Activated CD8-positive, alpha-beta T cell treated with anti-CD3 and anti-CD28 coated beads, Interleukin-2, amount 10 ng/mL, durations not matched to agents 7 days and 5 days (primary cell): ENCODE measurements at regions of chr11 and their contacts with region 1.

Region 1: GRCh38 chr11:14907411-14908213 is 15.6 kb upstream of the CYP2R1 start:
- DNase-seq: peak; percentile 89
- ATAC-seq: peak; percentile 68
- H3K4me3 Mint-ChIP-seq: no peak overlapping the region
- H3K27ac Mint-ChIP-seq: no peak overlapping the region
- H3K4me1 Mint-ChIP-seq: peaks cover 54% of the 10 kb centered on the region
- H3K27me3 Mint-ChIP-seq: no peaks in the 10 kb centered on the region

Region 2: DNA sequence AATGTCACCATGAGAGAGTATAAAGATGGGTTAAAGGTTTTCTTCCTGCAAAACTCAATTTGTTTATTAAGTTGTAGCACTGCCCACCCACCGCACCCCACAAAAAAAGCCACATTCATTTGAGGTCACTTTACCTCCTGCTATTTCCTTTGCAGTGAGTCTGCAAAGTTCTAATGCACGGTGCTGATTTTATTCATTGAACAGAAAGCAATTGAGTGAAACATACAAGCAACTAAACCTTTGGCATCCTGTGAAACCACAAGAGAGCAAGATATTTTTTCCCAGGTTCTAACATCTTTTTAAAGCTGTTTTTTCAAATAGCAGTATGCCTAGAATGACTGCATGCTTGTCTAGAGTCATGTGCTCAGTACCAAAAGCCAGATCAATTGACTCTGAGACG is 587.6 kb before region 1 on chr11:
- CTCF ChIA-PET with region 1: no interaction called
- POLR2A ChIA-PET with region 1: no interaction called
- DNase-seq: peak; percentile 88
- ATAC-seq: peak; percentile 93
- H3K4me3 Mint-ChIP-seq: peak overlapping the region; percentile 53
- H3K27ac Mint-ChIP-seq: peak overlapping the region; percentile 80
- H3K4me1 Mint-ChIP-seq: peaks cover 78% of the 10 kb centered on the region
- H3K27me3 Mint-ChIP-seq: no peaks in the 10 kb centered on the region

Region 3: GRCh38 chr11:14519917-14520746 is 387.5 kb before region 1 on chr11 and contains the start of gene PSMA1:
- CTCF ChIA-PET with region 1: interaction called, 26 read pairs
- POLR2A ChIA-PET with region 1: interaction called, 3 read pairs
- DNase-seq: peak; percentile 96
- ATAC-seq: peak; percentile 94
- H3K4me3 Mint-ChIP-seq: peak within 1 kb of the TSS; percentile 93
- H3K27ac Mint-ChIP-seq: peak within 1 kb of the TSS; percentile 94
- H3K4me1 Mint-ChIP-seq: peaks cover 29% of the 10 kb centered on the region
- H3K27me3 Mint-ChIP-seq: no peaks in the 10 kb centered on the region
- total RNA-seq, gene PSMA1: 211 to 215 TPM

Region 4: DNA sequence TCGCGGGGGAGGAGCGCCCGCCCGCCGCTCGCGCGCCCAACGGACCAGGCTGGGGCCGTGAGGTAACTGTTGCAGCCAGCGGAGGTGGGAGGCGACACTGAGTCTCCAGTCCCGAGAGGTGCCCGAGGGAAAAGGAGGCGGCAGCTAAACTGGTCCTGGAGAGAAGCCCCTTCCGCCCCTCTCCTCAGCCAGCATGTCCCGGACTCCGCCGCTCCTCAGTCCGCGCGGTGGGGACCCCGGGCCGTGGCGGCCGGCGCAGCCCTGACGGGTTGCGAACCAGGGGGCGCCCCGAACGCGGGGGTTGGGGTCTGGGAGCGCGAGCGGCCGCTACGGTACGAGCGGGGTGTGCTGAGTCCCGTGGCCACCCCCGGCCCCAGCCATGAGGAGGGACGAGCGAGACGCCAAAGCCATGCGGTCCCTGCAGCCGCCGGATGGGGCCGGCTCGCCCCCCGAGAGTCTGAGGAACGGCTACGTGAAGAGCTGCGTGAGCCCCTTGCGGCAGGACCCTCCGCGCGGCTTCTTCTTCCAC is 263.9 kb before region 1 on chr11 and contains the start of gene PDE3B:
- CTCF ChIA-PET with region 1: interaction called, 20 read pairs
- POLR2A ChIA-PET with region 1: interaction called, 8 read pairs
- DNase-seq: peak; percentile 89
- ATAC-seq: peak; percentile 77
- H3K4me3 Mint-ChIP-seq: peak within 1 kb of the TSS; percentile 81
- H3K27ac Mint-ChIP-seq: peak within 1 kb of the TSS; percentile 91
- H3K4me1 Mint-ChIP-seq: peaks cover 40% of the 10 kb centered on the region
- H3K27me3 Mint-ChIP-seq: no peaks in the 10 kb centered on the region
- total RNA-seq, gene PDE3B: 74.8 to 81.4 TPM

Region 5: DNA sequence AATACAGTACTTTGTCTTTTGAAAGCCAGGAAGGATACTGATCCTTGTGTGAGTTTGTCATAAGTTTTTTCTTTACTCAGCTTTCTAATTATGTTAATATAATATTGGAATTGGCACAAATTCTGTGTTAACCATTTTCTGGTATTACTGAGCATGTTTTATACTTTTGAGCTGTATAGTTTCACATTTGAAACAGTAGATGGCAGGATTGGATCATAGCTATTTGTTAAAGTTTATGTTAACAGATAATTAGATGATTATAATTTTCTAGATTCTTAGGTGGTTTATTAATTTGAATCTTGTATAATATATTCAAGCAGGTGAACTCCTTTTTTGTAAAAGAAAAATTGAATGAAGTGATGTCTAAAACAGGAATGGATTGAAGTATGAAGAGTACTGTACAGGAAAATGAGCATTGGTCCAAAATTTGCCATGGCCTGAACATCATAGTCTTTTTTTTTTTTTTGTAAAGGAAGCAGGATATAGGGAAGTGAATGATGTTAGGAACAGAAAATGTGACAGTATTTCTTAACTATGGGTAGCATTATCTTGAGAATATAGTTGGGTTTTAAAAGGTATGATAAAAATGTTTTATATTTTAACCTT is 117.6 kb before region 1 on chr11:
- CTCF ChIA-PET with region 1: interaction called, 125 read pairs
- POLR2A ChIA-PET with region 1: no interaction called
- DNase-seq: no peak
- ATAC-seq: no peak
- H3K4me3 Mint-ChIP-seq: no peak overlapping the region
- H3K27ac Mint-ChIP-seq: no peak overlapping the region
- H3K4me1 Mint-ChIP-seq: peaks cover 13% of the 10 kb centered on the region
- H3K27me3 Mint-ChIP-seq: no peaks in the 10 kb centered on the region

Region 6: GRCh38 chr11:14924318-14924717 is 16.7 kb after region 1 on chr11:
- CTCF ChIA-PET with region 1: interaction called, 77 read pairs
- POLR2A ChIA-PET with region 1: no interaction called
- DNase-seq: no peak
- ATAC-seq: no peak
- H3K4me3 Mint-ChIP-seq: no peak overlapping the region
- H3K27ac Mint-ChIP-seq: no peak overlapping the region
- H3K4me1 Mint-ChIP-seq: no peaks in the 10 kb centered on the region
- H3K27me3 Mint-ChIP-seq: no peaks in the 10 kb centered on the region

Region 7: GRCh38 chr11:15011776-15012175 is 104.2 kb after region 1 on chr11:
- CTCF ChIA-PET with region 1: interaction called, 172 read pairs
- POLR2A ChIA-PET with region 1: no interaction called
- DNase-seq: no peak
- ATAC-seq: no peak
- H3K4me3 Mint-ChIP-seq: no peak overlapping the region
- H3K27ac Mint-ChIP-seq: no peak overlapping the region
- H3K4me1 Mint-ChIP-seq: no peaks in the 10 kb centered on the region
- H3K27me3 Mint-ChIP-seq: peaks cover 30% of the 10 kb centered on the region

Region 8: GRCh38 chr11:15145615-15146014 is 238.0 kb after region 1 on chr11:
- CTCF ChIA-PET with region 1: no interaction called
- POLR2A ChIA-PET with region 1: no interaction called
- DNase-seq: no peak
- ATAC-seq: no peak
- H3K4me3 Mint-ChIP-seq: no peak overlapping the region
- H3K27ac Mint-ChIP-seq: no peak overlapping the region
- H3K4me1 Mint-ChIP-seq: peaks cover 9% of the 10 kb centered on the region
- H3K27me3 Mint-ChIP-seq: peaks cover 14% of the 10 kb centered on the region

Region 9: DNA sequence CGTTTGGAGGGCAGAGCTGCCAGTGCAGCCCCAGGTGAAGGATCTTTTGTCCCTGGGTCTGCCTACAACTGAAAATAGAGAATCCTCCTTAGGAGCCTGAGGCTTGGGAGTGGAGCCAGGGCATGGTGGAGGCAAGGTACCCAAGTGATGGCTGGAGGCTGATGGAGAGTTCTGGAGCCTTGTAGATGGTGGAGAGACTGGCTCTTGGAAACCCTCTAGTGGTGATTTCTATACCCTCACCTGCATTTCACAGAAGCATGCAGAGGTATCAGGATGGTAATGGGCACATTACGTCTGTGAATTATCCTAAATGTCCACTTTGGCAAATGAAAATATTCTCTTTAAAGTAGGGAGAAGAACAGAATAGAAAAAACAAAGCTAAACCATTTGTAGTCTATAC is 251.5 kb after region 1 on chr11:
- CTCF ChIA-PET with region 1: interaction called, 10 read pairs
- POLR2A ChIA-PET with region 1: no interaction called
- DNase-seq: no peak
- ATAC-seq: peak; percentile 55
- H3K4me3 Mint-ChIP-seq: no peak overlapping the region
- H3K27ac Mint-ChIP-seq: no peak overlapping the region
- H3K4me1 Mint-ChIP-seq: no peaks in the 10 kb centered on the region
- H3K27me3 Mint-ChIP-seq: peaks cover 13% of the 10 kb centered on the region

Region 10: GRCh38 chr11:15347969-15348734 is 440.5 kb after region 1 on chr11:
- CTCF ChIA-PET with region 1: no interaction called
- POLR2A ChIA-PET with region 1: no interaction called
- DNase-seq: no peak
- ATAC-seq: no peak
- H3K4me3 Mint-ChIP-seq: no peak overlapping the region
- H3K27ac Mint-ChIP-seq: no peak overlapping the region
- H3K4me1 Mint-ChIP-seq: no peaks in the 10 kb centered on the region
- H3K27me3 Mint-ChIP-seq: no peaks in the 10 kb centered on the region